ENCODE measurements at regions of chr11 and their contacts with region 1.

Region 1: GRCh38 chr11:13183094-13183825 is 94.3 kb upstream of the BMAL1 start:
- DNase-seq: peak; percentile 63
- H3K4me3 Mint-ChIP-seq: peak overlapping the region; percentile 21
- H3K27ac Mint-ChIP-seq: no peak overlapping the region
- H3K4me1 Mint-ChIP-seq: peaks cover 9% of the 10 kb centered on the region
- H3K27me3 Mint-ChIP-seq: peaks cover 14% of the 10 kb centered on the region

Region 2: DNA sequence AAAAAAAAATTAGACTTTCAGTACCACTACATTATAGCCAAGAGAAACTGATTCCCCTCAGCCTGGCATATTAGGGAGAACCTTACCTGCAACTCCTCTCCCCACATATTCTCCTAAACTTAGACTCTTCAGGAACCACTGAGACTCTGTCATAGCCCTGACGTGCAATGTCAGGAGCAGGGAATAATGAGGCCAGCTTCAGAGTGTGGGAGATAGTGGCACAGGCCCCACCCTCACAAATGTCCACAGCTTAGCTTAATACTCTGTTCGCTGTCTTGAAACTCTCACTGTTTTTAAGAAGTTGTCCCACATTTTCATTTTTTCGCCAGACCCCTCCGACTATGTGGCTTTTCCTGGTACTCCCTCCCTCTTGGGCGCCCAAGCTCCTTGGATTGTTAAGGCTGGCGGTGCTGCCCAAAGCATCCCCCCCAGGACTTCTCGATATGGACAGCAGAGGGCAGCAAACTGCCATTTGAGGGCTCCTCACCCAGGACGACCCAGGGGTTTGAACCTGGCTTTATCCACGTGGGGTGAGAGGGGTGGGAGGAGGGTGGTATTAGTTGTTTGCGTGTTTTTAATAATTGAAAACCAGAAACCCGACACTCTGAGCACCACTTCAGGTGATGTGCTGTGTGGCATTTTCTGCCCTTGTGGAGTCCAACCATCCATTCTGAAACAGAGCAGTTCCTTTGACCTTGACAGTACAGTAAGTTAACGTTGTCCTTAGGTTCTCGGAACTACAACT is 219.3 kb before region 1 on chr11:
- intact Hi-C with region 1: loop called (anchors 1 kb)
- DNase-seq: peak; percentile 87
- H3K4me3 Mint-ChIP-seq: no peak overlapping the region
- H3K27ac Mint-ChIP-seq: no peak overlapping the region
- H3K4me1 Mint-ChIP-seq: no peaks in the 10 kb centered on the region
- H3K27me3 Mint-ChIP-seq: peaks cover 13% of the 10 kb centered on the region

Region 3: GRCh38 chr11:13126430-13126829 is 56.8 kb before region 1 on chr11:
- intact Hi-C with region 1: no loop called
- DNase-seq: no peak
- H3K4me3 Mint-ChIP-seq: no peak overlapping the region
- H3K27ac Mint-ChIP-seq: no peak overlapping the region
- H3K4me1 Mint-ChIP-seq: no peaks in the 10 kb centered on the region
- H3K27me3 Mint-ChIP-seq: peaks cover 22% of the 10 kb centered on the region

Region 4: DNA sequence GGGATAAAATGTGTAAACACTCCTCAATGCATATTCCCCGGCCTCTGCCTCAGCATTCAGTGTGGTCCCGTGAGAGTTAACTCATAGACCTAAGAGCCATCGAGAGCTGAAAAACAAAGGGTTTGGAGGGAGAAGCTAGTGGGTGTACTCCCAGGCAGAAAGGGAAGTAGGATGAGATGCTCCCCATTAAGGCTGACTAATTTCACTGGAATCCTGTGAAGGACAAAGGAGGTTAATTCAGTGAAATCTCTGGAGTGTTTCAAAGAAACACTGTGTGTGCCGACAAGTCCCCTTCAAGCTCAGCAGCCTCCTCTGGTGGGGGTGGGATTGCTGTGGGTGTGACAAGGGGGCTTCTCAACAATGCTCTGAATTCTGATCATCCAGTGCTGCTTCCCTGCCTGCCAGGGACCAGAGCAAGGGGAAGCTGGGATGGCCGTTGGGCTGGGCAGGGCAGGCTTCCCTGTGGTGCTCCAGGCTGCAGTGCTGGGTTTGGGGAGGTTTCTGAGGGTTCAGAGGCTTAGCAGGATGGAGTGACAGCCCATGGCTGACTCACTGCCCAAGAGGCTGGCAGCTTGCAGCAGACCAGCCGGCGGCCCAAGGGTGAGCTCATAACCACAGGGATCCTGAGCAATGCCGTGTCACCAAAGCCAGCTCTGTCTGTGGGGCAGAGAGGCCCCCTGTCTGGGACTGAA is 32.9 kb after region 1 on chr11:
- intact Hi-C with region 1: no loop called
- DNase-seq: no peak
- H3K4me3 Mint-ChIP-seq: no peak overlapping the region
- H3K27ac Mint-ChIP-seq: no peak overlapping the region
- H3K4me1 Mint-ChIP-seq: no peaks in the 10 kb centered on the region
- H3K27me3 Mint-ChIP-seq: peaks cover 7% of the 10 kb centered on the region

Region 5: DNA sequence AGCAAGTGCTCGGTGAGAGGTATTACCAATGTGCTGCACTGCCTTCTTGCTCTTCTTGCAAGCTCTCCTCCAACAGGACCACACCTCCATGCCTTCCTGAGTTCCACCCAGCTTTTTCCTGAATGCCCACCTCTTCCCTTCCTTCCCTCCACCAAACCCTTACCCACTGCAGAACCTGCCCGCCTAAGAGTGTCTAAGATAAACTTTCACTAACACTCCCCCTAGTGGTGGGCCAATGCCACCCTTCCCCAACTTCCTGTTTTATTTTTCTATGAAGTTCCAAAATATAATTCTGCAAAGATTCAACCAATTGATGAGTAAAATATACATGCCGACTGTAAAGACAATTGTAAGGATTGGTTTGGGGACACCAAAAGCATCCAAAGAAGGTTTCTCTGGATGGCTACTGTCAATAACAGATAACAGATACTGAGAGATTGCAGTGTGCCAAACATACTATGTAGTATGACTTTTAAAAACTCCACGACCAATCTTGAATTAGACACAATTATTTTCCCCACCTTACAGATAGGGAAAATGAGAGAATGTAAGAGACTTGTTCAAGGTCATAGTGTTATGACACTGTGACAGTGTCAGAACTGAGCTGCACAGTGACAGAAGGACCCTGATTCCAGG is 55.7 kb after region 1 on chr11:
- intact Hi-C with region 1: loop called (anchors 1 kb)
- DNase-seq: peak; percentile 85
- H3K4me3 Mint-ChIP-seq: no peak overlapping the region
- H3K27ac Mint-ChIP-seq: no peak overlapping the region
- H3K4me1 Mint-ChIP-seq: peaks cover 2% of the 10 kb centered on the region
- H3K27me3 Mint-ChIP-seq: peaks cover 43% of the 10 kb centered on the region